Dendritic cell treated with granulocyte-macrophage colony-stimulating factor and Interleukin-4, amounts not matched to agents 40 ng/mL and 50 ng/mL, for 4 days (primary cell): ENCODE measurements at regions of chr1 and their contacts with region 1.

Region 1: DNA sequence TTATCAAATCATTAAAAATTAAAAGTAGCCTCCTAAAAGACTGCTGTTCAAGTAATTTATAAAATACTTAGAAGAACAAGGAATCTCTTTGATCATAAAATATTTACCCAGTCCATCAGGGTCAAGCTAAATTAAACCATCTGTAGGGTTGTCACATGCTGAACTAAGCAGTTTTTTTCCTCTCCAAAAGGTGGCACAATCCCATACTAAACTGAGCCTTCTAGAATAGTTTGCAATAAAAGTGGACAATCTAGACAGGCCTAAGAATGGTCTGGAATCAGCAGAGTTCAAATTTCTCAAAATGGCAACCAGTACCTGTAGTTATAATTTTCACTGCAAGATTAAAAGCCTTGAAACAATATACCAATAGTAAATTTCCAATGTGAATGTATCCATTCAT is 194.8 kb downstream of the EIF4G3 start:
- H3K4me3 Mint-ChIP-seq: no peak overlapping the region
- H3K27ac Mint-ChIP-seq: no peak overlapping the region
- H3K4me1 Mint-ChIP-seq: peaks cover 5% of the 10 kb centered on the region
- H3K27me3 Mint-ChIP-seq: no peaks in the 10 kb centered on the region

Region 2: DNA sequence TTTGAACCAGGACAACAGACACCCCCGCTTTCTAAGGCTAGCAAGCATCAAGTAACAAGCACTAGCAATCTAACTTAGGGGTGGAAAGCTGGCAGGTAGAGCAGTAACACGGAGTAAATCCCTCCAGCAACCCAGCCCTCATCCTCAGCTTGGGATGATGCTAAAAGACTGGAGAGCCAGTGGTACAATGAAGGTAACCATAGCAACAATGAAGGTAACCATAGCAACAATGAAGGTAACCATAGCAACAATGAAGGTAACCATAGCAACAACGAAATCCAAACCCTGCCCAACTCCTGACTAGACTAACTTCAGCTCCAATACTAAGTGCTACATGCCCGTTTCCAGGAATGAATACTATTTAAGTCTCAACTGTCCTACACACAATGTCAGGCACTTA is 217.0 kb after region 1 on chr1:
- intact Hi-C with region 1: loop called (anchors 5 kb)
- H3K4me3 Mint-ChIP-seq: no peak overlapping the region
- H3K27ac Mint-ChIP-seq: no peak overlapping the region
- H3K4me1 Mint-ChIP-seq: peaks cover 5% of the 10 kb centered on the region
- H3K27me3 Mint-ChIP-seq: peaks cover 3% of the 10 kb centered on the region